ENCODE measurements at regions of chr2 and their contacts with region 1.

Region 1: GRCh38 chr2:37156857-37157714 is at the start of gene EIF2AK2:
- DNase-seq: peak; percentile 89
- H3K4me3 ChIP-seq: peak within 1 kb of the TSS; percentile 64 to 96 (median 84)
- H3K27ac ChIP-seq: peak within 1 kb of the TSS; percentile 89 to 95 (median 90)
- H3K4me1 ChIP-seq: peaks cover 7 to 19% (median 15%) of the 10 kb centered on the region in 4 donors
- H3K27me3 ChIP-seq: no peaks in the 10 kb centered on the region
- CTCF ChIP-seq: no peak
- EP300 ChIP-seq: no peak
- POLR2A ChIP-seq: peak; percentile 31
- total RNA-seq, gene EIF2AK2: 19.5 to 63.2 (median 25.8) TPM

Region 2: DNA sequence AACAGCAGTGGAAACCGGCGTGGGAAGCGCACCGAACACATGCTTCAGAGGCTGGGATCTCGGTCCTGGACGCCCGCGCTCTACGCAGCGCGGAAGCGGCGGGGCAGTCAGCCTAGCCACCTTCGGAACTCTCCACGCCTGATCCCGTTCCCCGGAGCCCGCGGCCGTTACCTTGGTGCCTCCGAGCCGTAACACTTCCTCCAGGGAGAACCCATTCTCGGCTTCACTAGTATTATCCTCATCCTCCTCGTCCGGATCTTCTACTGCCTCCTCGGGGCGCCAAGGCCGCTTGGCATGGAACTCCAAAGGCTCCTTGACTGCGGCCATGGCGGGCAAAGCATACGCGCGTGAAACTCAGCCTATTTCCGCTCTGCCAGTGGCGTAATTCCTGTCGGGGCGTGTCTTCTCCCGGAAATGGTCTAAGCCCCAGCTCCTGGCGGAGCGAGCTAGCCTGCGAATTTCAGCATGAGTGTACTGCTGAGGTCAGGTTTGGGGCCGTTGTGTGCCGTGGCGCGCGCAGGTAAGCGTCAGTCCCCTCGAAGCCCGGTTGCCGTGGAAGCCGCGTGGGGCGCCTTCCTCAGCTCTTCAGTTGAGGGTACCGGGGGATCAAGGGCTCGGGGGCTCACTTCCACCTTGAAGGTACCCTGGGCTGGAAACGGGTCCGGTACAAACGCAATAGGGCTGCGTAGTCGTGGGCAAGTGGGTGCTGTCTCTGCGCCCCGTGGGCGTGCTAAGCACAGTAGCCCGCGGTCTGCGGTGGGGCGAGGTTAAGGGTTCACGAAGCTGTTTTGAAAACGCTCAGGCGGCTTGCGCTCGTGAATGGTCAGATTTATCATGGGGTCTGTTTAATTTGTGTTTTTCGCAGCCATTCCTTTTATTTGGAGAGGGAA is 74.4 kb after region 1 on chr2 and contains the starts of genes CEBPZ and NDUFAF7:
- in situ Hi-C with region 1: no loop called
- intact Hi-C with region 1: loop called (anchors 10 kb)
- DNase-seq: peak; percentile 94
- H3K4me3 ChIP-seq: peak within 1 kb of the TSS; percentile 76 to 80 (median 78)
- H3K27ac ChIP-seq: peak within 1 kb of the TSS; percentile 93 to 94 (median 94)
- H3K4me1 ChIP-seq: peaks cover 0 to 34% (median 24%) of the 10 kb centered on the region in 4 donors
- H3K27me3 ChIP-seq: no peaks in the 10 kb centered on the region
- CTCF ChIP-seq: peak in 1 of 5 experiments; percentile 27
- EP300 ChIP-seq: no peak
- POLR2A ChIP-seq: peak; percentile 91
- total RNA-seq, gene CEBPZ: 9.4 to 235 (median 33.7) TPM
- total RNA-seq, gene NDUFAF7: 1.9 to 21.6 (median 16.5) TPM

Region 3: GRCh38 chr2:37890893-37891495 is 733.9 kb after region 1 on chr2:
- in situ Hi-C with region 1: loop called in 2 of 4 experiments (anchors 25 kb)
- intact Hi-C with region 1: no loop called
- DNase-seq: peak; percentile 80
- H3K4me3 ChIP-seq: no peak overlapping the region
- H3K27ac ChIP-seq: no peak overlapping the region
- H3K4me1 ChIP-seq: peaks cover 0 to 14% (median 2%) of the 10 kb centered on the region in 4 donors
- H3K27me3 ChIP-seq: no peaks in the 10 kb centered on the region
- CTCF ChIP-seq: peak; percentile 66 to 81 (median 75)
- EP300 ChIP-seq: no peak
- POLR2A ChIP-seq: no peak

Measured in transverse colon (tissue), 4 donors.